HepG2 (cell line): ENCODE measurements at regions of chr12 and their contacts with region 1.

Region 1: GRCh38 chr12:54285150-54286041 is 4.9 kb downstream of the HNRNPA1 start:
- DNase-seq: no peak
- ATAC-seq: no peak
- H3K4me3 ChIP-seq: no peak overlapping the region; a peak in 1 of 6 replicates
- H3K27ac ChIP-seq: peak overlapping the region; percentile 16
- H3K4me1 ChIP-seq: peaks cover 48% of the 10 kb centered on the region
- H3K27me3 ChIP-seq: no peaks in the 10 kb centered on the region; a peak in 1 of 5 replicates
- CTCF ChIP-seq: no peak
- EP300 ChIP-seq: no peak
- POLR2A ChIP-seq: no peak; a peak in 1 of 4 replicates
- RAD21 ChIP-seq: no peak

Region 2: DNA sequence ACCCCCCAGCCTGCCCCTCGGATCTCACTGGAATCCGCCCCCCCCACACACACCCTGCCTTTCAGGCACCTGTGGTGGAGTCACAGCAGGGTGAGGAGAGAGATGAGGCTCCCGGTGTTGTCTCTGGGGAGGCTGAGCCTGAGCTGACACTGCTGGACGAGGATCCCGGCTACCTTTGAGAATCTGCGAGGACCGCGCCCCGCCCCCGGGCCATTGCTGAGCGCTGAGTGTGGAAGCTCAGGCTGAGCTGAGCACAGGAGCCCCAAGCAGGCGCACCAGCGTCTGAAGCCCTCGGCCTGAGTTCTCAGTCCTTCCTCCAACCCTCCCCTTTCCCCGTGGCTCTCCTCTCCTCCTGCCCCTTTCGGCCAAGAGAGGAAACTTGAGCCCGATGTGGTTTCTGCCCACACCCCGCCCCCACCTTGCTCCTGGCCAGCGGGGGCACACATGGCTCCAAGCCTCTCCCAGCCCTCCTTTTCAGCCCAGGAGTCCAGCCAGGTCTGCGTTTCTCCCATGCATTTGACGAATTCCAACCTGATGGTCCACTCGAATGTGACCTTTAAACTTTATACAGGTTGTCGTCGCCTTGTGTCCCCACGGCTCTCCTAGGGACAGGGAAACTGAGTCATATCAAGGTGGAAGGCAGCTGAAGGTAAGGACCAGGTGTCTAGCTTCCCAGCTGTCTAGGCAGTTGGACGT is 15.5 kb after region 1 on chr12 and contains the start of gene NFE2:
- CTCF ChIA-PET with region 1: no interaction called
- POLR2A ChIA-PET with region 1: interaction called, 176 read pairs
- in situ Hi-C with region 1: no loop called
- intact Hi-C with region 1: no loop called
- DNase-seq: peak; percentile 58
- ATAC-seq: peak; percentile 87
- H3K4me3 ChIP-seq: peak within 1 kb of the TSS; percentile 56 to 78 (median 63)
- H3K27ac ChIP-seq: peak within 1 kb of the TSS; percentile 91
- H3K4me1 ChIP-seq: peaks cover 82% of the 10 kb centered on the region
- H3K27me3 ChIP-seq: no peaks in the 10 kb centered on the region
- CTCF ChIP-seq: no peak; the same call in 1 of the 2 replicates
- EP300 ChIP-seq: no peak; a peak in 1 of 4 replicates
- POLR2A ChIP-seq: peak; percentile 51 to 72
- RAD21 ChIP-seq: no peak
- total RNA-seq, gene NFE2: 7.8 and 8.5 TPM in 2 replicates